ENCODE measurements at regions of chr1 and their contacts with region 1.

Region 1: DNA sequence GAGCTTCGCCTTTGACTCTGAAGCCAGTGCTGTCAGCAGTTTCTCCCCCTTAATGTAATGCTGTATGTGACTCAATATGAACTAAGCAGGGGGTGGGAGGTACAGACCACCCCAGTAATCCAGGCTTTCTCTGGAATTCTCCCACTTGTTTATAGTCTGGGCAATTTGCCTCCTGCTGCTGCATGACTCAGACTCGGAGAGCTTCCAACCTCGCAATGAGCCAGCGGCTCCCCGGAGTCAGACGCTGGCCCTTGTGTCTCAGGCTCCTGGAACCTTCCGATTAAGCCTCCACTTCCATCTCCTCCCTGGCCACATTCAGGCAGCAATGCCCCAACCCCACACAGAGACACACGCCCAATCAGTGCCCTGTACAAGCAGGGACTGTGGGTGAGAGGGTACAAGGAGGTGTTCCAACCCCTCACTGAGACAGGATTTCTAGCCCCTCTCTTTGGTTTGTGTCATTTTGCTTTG is 471.7 kb upstream of the VAMP3 start:
- DNase-seq: peak; percentile 94
- H3K4me3 ChIP-seq: no peak overlapping the region
- H3K27ac ChIP-seq: peak overlapping the region; percentile 71
- H3K4me1 ChIP-seq: peaks cover 54% of the 10 kb centered on the region
- H3K27me3 ChIP-seq: no peaks in the 10 kb centered on the region
- CTCF ChIP-seq: no peak

Region 2: DNA sequence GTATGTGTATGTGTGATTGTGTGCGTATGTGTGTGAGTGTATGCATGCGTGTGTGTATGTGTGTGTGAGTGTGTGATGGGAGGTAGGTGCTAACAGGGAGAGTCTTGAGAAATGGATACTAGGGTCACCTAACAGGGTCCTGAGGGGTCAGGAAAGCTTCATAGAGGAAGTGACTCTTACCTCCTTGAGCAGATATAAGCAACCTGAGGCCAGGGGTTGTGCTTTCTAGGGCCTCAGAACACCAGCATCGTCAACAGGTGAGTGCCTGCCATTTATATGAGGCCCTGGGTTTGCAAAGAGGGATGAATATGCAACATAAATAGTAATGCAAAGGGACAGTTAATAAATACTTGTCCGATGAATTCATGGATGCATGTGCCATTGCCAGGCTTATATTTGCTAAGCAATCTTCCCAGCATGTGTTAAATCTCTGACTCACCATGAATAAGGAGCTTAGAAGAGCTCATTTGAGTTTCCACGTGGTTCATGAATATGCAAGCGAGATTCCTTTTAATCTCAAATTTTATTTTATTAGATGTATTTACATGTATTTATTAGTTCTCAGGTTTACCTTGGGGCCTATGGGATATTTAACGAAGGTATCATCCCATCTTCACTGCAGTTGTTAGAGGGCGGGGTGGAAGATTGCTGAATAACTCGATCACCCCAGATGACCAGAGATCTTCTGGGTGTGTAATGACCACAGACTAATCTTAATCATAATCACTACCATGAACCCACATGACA is 75.9 kb before region 1 on chr1:
- CTCF ChIA-PET with region 1: no interaction called
- POLR2A ChIA-PET with region 1: no interaction called
- intact Hi-C with region 1: loop called (anchors 2 kb)
- DNase-seq: peak; percentile 81
- H3K4me3 ChIP-seq: no peak overlapping the region
- H3K27ac ChIP-seq: no peak overlapping the region
- H3K4me1 ChIP-seq: peaks cover 11% of the 10 kb centered on the region
- H3K27me3 ChIP-seq: no peaks in the 10 kb centered on the region
- CTCF ChIP-seq: no peak

Region 3: DNA sequence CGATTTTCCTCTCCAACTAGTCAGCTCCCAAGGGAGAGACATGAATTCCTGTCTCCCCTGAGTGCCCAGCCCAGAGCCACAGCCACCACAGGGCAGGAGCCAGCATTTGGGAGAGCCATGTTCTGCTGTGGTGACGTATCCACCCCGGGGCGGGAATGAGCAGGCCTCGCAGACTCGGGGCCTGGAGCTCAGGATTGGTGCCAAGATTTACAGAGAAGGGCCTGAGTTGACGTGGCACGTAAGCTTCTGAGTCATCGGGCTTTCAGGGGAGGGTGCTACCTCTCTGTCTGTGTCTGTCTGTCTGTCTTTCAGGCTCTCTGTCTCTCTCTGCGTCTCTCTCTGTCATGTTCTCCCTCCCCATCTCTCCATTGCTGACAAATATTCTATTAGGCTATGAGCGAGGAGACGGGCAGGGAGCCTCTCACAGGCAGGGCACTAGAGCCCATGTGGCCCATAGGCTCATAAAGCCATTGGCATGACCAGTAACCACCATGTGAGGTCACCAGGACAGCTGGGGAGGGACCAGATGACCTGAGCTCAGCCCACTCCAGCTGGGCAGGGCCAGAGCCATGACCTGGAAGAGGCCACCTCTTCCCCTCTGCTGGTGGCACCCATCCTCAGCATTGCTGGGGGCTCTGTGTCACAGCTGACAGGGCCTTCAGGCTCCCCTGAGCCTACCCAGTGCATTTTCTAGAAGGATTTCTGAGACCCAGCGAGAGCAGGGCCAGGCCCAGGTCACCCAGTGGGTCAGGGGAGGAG is 171.7 kb after region 1 on chr1:
- CTCF ChIA-PET with region 1: no interaction called
- POLR2A ChIA-PET with region 1: no interaction called
- intact Hi-C with region 1: loop called (anchors 10 kb)
- DNase-seq: peak; percentile 94
- H3K4me3 ChIP-seq: no peak overlapping the region
- H3K27ac ChIP-seq: peak overlapping the region; percentile 72
- H3K4me1 ChIP-seq: peaks cover 22% of the 10 kb centered on the region
- H3K27me3 ChIP-seq: no peaks in the 10 kb centered on the region
- CTCF ChIP-seq: no peak

Region 4: GRCh38 chr1:7539769-7540175 is 240.4 kb after region 1 on chr1:
- CTCF ChIA-PET with region 1: no interaction called
- POLR2A ChIA-PET with region 1: no interaction called
- intact Hi-C with region 1: loop called (anchors 10 kb)
- DNase-seq: peak; percentile 57
- H3K4me3 ChIP-seq: no peak overlapping the region
- H3K27ac ChIP-seq: no peak overlapping the region
- H3K4me1 ChIP-seq: peaks cover 22% of the 10 kb centered on the region
- H3K27me3 ChIP-seq: no peaks in the 10 kb centered on the region
- CTCF ChIP-seq: peak; percentile 78

Region 5: DNA sequence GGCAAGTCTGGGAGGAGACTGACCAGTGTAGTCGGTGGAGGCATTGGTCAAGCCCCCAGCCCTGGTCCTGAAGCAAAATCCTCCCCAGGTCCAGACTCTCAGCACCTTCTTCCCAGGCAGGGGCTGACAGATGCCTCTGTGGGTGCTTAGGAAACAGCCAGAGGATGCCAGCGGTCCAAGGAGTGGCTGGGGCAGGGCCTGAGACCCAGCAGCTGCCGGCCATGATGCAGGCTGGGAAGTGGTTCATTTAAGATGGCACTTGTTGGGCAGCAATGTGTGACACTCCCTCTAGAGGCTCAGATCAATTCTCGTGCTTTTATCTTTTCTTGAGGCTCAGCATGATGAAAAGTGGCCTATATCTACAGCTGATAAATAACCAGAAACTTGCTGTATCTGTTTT is 306.7 kb after region 1 on chr1:
- CTCF ChIA-PET with region 1: no interaction called
- POLR2A ChIA-PET with region 1: no interaction called
- intact Hi-C with region 1: no loop called
- DNase-seq: no peak
- H3K4me3 ChIP-seq: no peak overlapping the region
- H3K27ac ChIP-seq: no peak overlapping the region
- H3K4me1 ChIP-seq: no peaks in the 10 kb centered on the region
- H3K27me3 ChIP-seq: no peaks in the 10 kb centered on the region
- CTCF ChIP-seq: no peak